Right ventricle myocardium inferior (tissue), 1 donor: ENCODE measurements at regions of chr1 and their contacts with region 1.

Region 1: GRCh38 chr1:33367485-33368405 is 46.8 kb upstream of the A3GALT2 start:
- DNase-seq: peak; percentile 94
- ATAC-seq: peak; percentile 73

Region 2: DNA sequence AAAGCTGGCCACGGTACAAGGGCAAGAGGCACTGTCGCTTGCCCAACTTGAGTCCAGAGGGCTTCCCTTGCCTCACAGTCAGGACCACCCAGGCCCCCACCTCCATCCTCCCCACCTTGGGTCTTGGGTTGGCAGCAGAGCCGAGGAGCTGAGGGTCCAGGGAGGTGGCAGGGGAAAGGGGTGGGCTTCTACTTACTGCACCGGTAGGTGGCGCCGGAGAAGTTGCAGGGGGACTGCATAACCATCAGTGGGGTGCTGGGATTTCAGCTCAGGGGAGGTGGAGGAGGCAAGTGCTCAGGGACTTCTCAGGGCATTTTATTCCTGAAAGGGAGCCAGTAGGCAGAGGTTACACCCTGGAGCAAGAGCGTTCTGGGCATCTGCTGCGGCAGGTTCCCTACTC is 229.9 kb before region 1 on chr1:
- intact Hi-C with region 1: loop called (anchors 10 kb)
- DNase-seq: no peak
- ATAC-seq: peak; percentile 45

Region 3: GRCh38 chr1:33295450-33296081 is 72.2 kb before region 1 on chr1:
- intact Hi-C with region 1: loop called (anchors 1 kb)
- DNase-seq: peak; percentile 90
- ATAC-seq: peak; percentile 87

Region 4: DNA sequence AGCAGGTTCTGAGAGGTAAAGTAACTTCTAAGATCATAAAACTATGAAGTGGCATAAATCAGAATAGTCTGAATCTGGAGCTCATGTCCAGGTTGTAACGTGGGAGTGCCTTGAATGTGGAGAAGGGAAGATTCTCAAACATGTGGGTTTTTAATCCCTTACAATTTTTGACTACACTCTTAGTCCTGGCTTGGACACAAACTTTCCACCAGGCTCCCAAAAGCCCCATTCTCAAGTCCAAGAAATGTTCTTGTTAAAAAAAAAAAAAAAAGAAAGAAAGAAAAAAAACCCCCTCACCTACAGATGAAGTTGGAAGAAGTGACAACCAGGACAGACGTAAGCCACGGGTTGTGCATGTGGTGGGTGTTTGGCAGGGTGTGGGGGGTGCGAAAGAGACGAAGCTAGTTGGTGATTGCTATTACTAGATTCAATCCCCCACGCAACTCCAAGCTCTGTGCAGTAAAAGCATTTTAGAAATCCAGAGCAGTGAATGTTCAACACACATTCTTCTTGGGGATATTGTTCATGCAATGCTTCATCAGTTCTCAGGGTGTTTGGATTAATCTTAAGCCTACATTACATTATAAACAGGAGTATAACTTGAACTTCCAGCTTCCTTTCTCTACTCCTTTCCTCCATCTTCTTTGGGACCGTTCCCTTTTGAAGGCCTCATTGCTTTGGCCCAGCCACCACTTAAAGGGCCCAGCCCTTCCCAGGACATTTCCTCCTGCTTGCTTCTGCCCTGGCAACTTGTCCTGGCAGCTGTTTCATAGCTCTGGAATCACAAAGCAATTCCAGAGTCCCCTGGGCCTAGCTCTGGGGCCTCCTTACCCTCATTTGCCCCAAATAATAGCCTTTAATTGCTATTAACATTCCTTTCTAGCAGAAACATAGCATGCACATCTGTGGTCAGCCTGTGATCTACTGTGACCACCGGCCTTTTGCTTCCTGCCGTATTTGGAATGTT is 21.3 kb after region 1 on chr1:
- intact Hi-C with region 1: no loop called
- DNase-seq: peak; percentile 74
- ATAC-seq: peak; percentile 72

Region 5: DNA sequence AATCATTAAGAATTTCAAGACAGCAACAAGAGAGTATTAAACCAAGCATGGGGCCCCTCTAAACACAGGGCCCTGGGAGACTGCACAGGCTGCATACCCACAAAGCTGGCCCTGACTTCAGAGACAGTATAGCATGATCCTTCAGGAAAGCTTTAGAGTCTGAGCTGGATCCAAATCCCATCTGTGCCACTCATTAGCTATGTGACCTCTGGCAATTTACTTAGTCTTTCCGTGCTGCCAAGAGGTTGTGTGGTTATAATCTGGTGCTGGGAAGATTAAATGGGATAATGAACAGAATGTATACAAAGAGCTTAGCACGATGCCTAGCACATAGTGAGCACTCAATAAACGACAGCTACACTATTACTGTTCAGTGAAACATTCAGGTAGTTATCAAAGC is 59.2 kb after region 1 on chr1:
- intact Hi-C with region 1: loop called (anchors 1 kb)
- DNase-seq: no peak
- ATAC-seq: no peak

Region 6: DNA sequence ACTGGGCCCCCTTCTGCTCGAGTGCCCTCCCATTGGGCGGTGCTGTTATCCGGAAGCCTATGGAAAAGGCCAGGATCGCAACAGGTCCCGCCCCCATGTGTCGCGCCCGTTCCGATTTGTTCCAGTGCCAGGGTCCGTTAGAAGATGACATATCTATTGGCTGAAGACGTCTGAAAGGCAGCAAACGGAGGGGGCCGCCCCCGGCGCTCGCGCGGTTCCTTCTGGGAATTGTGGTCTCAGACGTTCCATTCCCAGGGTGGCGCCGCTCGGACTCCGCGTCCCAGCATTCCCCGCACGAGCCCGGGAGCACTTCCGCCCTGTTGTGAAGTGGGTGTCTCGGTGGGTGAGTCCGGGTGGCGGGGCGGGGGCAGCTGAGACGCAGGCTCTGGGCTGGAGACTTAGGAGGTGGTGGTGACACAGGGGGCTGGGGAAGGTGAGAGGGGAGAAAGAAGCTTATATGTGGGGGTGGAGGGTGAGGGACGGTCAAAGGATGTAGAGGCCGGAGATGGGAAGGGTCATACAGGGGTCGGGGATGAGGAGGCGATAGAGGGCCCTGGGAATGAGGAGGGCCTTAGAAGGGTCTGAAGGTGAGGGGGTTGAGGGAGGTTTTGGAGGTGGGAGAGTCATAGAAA is 104.7 kb after region 1 on chr1 and contains the start of gene ZSCAN20:
- intact Hi-C with region 1: loop called (anchors 5 kb)
- DNase-seq: peak; percentile 98
- ATAC-seq: peak; percentile 95
- total RNA-seq, gene ZSCAN20: 4.7 TPM